Breast epithelium (tissue), 4 donors: ENCODE measurements at regions of chrX and their contacts with region 1.

Region 1: GRCh38 chrX:1807301-1807731 is 192.5 kb downstream of the ASMT start:
- DNase-seq: no peak
- H3K4me3 ChIP-seq: no peak overlapping the region
- H3K27ac ChIP-seq: no peak overlapping the region
- H3K4me1 ChIP-seq: no peaks in the 10 kb centered on the region
- H3K27me3 ChIP-seq: peaks cover 0 to 5% of the 10 kb centered on the region in 2 donors
- CTCF ChIP-seq: no peak
- POLR2A ChIP-seq: no peak

Region 2: GRCh38 chrX:727738-728621 is 1079.3 kb before region 1 on chrX:
- intact Hi-C with region 1: no loop called
- DNase-seq: no peak
- H3K4me3 ChIP-seq: no peak overlapping the region
- H3K27ac ChIP-seq: no peak overlapping the region
- H3K4me1 ChIP-seq: no peaks in the 10 kb centered on the region
- H3K27me3 ChIP-seq: no peaks in the 10 kb centered on the region
- CTCF ChIP-seq: no peak
- POLR2A ChIP-seq: no peak

Region 3: DNA sequence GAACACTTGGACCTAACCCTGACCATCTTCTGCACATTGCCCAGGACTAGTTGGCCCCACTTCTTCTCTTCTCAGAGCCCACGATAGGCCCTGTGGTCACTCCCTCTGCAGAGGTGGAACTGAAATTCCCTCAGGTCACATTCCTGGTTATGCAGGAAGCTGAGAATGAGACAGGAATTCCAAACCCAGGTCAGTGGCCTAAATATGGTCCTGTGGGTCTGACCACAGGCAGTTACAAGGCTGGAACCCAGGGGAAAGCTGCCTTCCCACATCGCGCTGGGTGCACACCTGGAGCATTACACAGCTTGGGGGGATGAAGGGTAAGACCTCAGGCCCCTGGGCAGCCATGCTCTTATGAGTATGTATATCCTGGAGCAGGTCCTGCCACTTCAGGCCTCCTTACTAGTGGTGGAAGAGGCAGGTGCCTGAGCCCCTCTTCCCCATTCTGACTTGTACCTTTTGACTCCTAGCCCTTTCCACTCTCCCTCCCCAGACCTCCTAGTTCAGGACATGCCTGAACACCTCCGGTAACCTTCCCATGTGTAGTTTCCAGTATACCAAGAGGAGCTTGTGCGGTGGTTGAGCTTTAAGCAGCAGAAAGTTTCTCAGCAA is 18.9 kb before region 1 on chrX:
- intact Hi-C with region 1: loop called (anchors 1 kb)
- DNase-seq: no peak
- H3K4me3 ChIP-seq: no peak overlapping the region
- H3K27ac ChIP-seq: no peak overlapping the region
- H3K4me1 ChIP-seq: no peaks in the 10 kb centered on the region
- H3K27me3 ChIP-seq: no peaks in the 10 kb centered on the region
- CTCF ChIP-seq: no peak
- POLR2A ChIP-seq: no peak